BJ (cell line): ENCODE measurements at regions of chr10 and their contacts with region 1.

Region 1: DNA sequence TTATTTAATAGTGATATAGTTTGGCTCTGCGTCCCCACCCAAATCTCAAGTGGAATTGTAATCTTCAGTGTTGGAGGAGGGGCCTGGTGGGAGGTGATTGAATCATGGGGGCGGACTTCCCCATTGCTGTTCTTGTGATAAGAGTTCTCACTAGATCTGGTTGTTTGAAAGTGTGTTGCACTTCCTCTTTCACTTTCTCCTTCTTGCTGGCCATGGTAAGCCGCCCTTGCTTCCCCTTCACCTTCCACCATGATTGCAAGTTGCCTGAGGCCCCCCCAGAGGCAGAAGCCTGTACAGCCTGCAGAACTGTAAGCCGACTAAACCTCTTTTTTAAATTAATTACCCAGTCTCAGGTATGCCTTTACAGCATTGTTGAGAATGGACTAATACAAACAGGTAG is 101.4 kb downstream of the MTPAP start:
- DNase-seq: no peak
- H3K4me3 ChIP-seq: no peak overlapping the region
- H3K27me3 ChIP-seq: no peaks in the 10 kb centered on the region
- CTCF ChIP-seq: no peak

Region 2: GRCh38 chr10:30057421-30057841 is 190.3 kb before region 1 on chr10:
- CTCF ChIA-PET with region 1: no interaction called
- POLR2A ChIA-PET with region 1: interaction called, 20 read pairs
- DNase-seq: no peak
- H3K4me3 ChIP-seq: no peak overlapping the region
- H3K27me3 ChIP-seq: no peaks in the 10 kb centered on the region
- CTCF ChIP-seq: no peak

Region 3: GRCh38 chr10:30141423-30141822 is 106.3 kb before region 1 on chr10:
- CTCF ChIA-PET with region 1: no interaction called
- POLR2A ChIA-PET with region 1: no interaction called
- DNase-seq: no peak
- H3K4me3 ChIP-seq: no peak overlapping the region
- H3K27me3 ChIP-seq: peaks cover 2% of the 10 kb centered on the region
- CTCF ChIP-seq: no peak

Region 4: DNA sequence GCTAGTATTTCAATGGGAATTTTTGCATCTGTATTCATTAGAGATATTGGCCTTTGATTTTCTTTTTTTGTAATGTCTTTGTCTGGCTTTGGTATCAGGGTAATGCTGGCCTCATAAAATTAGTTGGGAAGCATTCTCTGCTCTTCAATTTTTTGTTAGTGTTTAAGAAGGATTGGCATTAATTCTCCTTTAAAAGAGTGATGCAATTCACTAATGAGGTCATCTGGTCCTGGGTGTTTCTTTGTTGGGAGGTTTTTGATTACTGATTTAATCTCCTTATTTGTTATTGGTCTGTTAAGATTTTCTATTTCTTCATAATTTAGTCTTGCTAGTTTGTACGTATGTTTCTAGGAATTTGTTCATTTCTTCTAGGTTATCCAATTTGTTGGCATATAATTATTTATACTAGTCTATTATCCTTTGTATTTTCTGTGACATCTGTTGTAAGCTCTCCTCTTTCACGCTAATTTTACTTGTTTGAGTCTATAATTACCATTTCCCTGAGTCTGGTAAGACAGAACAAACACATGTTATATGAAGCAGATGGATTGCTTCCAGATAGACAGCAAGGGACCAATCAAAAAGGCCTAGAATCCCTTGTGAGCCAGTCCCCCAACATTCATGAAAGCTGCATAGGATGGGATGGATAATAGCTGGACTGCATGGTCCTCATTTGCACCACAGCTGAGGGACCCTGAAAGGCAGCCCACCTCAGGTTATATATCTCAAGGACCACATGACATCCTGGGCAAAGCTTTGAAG is 47.0 kb after region 1 on chr10:
- CTCF ChIA-PET with region 1: no interaction called
- POLR2A ChIA-PET with region 1: no interaction called
- DNase-seq: no peak
- H3K4me3 ChIP-seq: no peak overlapping the region
- H3K27me3 ChIP-seq: peaks cover 1% of the 10 kb centered on the region; the same call in 1 of the 2 replicates
- CTCF ChIP-seq: no peak